PC-9 (cell line): ENCODE measurements at regions of chr11 and their contacts with region 1.

Region 1: DNA sequence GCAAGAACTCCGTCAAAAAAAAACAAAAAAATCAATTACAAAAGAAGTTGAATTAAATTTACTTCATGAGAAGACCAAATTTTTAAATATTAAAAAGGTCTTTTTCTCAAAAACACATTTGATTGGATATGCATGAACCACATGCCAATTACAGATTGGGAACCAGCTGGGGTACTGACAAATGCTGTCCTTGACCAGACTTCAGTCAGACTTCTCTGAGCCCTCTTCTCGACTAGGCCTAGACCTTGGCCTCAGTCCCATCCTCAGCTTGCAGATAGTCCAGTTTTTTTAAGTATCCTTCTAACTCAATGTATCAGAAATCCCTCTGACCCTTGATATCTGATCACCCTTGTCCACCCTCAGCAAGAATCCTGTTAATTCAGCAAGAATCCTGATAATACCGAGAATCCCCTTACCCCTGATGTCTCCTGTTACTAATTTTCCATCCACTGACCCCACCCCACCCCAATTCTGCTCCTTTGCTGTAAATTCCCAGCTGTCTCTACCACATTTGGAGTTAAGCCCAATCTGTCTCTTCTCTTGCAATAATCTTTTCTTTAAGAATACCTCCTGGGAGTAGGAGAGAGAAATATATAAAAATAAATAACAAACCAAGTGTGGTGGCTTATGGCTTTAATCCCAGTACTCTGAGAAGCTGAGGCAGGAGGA is 30.9 kb downstream of the OR4D9 start:
- DNase-seq: no peak
- H3K4me3 ChIP-seq: no peak overlapping the region
- H3K27ac ChIP-seq: no peak overlapping the region
- H3K4me1 ChIP-seq: 0 out of 2 replicates have a peak, but pooled peaks cover 13% of the 10 kb centered on the region
- H3K27me3 ChIP-seq: no peaks in the 10 kb centered on the region
- CTCF ChIP-seq: no peak

Region 2: GRCh38 chr11:59560702-59561469 is 18.6 kb after region 1 on chr11:
- CTCF ChIA-PET with region 1: no interaction called
- POLR2A ChIA-PET with region 1: interaction called, 3 read pairs
- intact Hi-C with region 1: loop called (anchors 1 kb)
- DNase-seq: peak; percentile 81 to 96
- H3K4me3 ChIP-seq: peak overlapping the region; percentile 79
- H3K27ac ChIP-seq: peak overlapping the region; percentile 84
- H3K4me1 ChIP-seq: peaks cover 22% of the 10 kb centered on the region
- H3K27me3 ChIP-seq: no peaks in the 10 kb centered on the region
- CTCF ChIP-seq: no peak

Region 3: GRCh38 chr11:59582006-59582405 is 39.7 kb after region 1 on chr11:
- CTCF ChIA-PET with region 1: no interaction called
- POLR2A ChIA-PET with region 1: no interaction called
- intact Hi-C with region 1: no loop called
- DNase-seq: no peak
- H3K4me3 ChIP-seq: no peak overlapping the region
- H3K27ac ChIP-seq: no peak overlapping the region
- H3K4me1 ChIP-seq: no peaks in the 10 kb centered on the region
- H3K27me3 ChIP-seq: no peaks in the 10 kb centered on the region
- CTCF ChIP-seq: no peak

Region 4: DNA sequence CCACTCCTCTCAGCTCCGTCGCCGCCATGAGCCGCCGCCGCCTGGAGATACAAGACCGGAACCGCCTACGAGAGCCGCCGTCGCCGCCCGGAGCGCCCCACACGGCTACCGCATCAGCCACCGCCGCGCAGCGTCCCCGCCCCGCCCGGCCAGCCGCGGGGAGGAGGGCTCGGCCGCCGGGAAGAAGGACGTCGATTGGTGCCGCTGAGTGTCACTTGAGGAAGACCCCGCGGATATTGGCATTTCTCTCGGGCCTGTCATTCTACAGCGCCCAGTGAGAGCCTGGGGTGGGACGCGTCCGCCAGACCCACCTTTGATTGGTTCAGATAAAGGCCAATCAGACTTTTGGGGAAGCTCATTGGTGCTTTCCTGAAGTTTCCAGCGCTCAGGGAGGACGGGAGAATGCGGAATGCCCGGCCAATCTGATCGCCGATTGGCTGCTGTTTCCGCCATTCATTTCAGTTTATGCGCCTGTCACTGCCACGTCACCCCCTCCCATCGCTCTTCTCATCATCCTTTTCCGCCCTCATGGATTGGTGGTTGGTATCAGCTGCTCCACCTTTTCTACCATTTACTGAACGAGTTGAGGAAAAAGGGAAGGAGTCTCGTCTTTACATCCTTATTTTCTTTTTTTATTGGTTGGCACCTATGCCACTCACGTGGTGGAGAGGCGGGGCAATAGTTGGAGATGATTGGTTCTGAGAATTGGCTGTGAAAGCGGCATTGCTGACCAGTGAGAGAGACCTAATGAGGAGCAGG is 73.5 kb after region 1 on chr11 and contains the start of gene OSBP:
- CTCF ChIA-PET with region 1: no interaction called
- POLR2A ChIA-PET with region 1: interaction called, 10 read pairs
- intact Hi-C with region 1: no loop called
- DNase-seq: peak; percentile 99 to 100
- H3K4me3 ChIP-seq: peak within 1 kb of the TSS; percentile 71
- H3K27ac ChIP-seq: peak within 1 kb of the TSS; percentile 67
- H3K4me1 ChIP-seq: peaks cover 37% of the 10 kb centered on the region
- H3K27me3 ChIP-seq: no peaks in the 10 kb centered on the region
- CTCF ChIP-seq: no peak
- total RNA-seq, gene OSBP: 40.4 and 49.7 TPM in 2 replicates

Region 5: GRCh38 chr11:59802639-59803176 is 260.4 kb after region 1 on chr11:
- CTCF ChIA-PET with region 1: no interaction called
- POLR2A ChIA-PET with region 1: no interaction called
- intact Hi-C with region 1: loop called (anchors 1 kb)
- DNase-seq: peak; percentile 39 to 48
- H3K4me3 ChIP-seq: no peak overlapping the region
- H3K27ac ChIP-seq: no peak overlapping the region
- H3K4me1 ChIP-seq: peaks cover 25% of the 10 kb centered on the region
- H3K27me3 ChIP-seq: no peaks in the 10 kb centered on the region
- CTCF ChIP-seq: peak; percentile 91

Region 6: GRCh38 chr11:60018058-60018457 is 475.8 kb after region 1 on chr11:
- CTCF ChIA-PET with region 1: no interaction called
- POLR2A ChIA-PET with region 1: no interaction called
- intact Hi-C with region 1: no loop called
- DNase-seq: no peak
- H3K4me3 ChIP-seq: no peak overlapping the region
- H3K27ac ChIP-seq: no peak overlapping the region
- H3K4me1 ChIP-seq: no peaks in the 10 kb centered on the region
- H3K27me3 ChIP-seq: peaks cover 20% of the 10 kb centered on the region; the same call in 1 of the 2 replicates
- CTCF ChIP-seq: no peak